Heart right ventricle (tissue), 16 donors: ENCODE measurements at regions of chr10 and their contacts with region 1.

Region 1: GRCh38 chr10:91088300-91089140 is 131.9 kb upstream of the PCGF5 start:
- DNase-seq: peak in 1 of 2 donors; percentile 55
- ATAC-seq: peak; percentile 81 to 98 (median 93)
- H3K4me3 ChIP-seq: no peak overlapping the region
- H3K27ac ChIP-seq: peak overlapping the region; percentile 24 to 92 (median 78)
- H3K4me1 ChIP-seq: peaks cover 0 to 30% (median 10%) of the 10 kb centered on the region in 9 donors
- H3K27me3 ChIP-seq: no peaks in the 10 kb centered on the region
- CTCF ChIP-seq: peak in 7 of 9 donors; percentile 10 to 40 (median 31)

Region 2: GRCh38 chr10:90462749-90463470 is 625.6 kb before region 1 on chr10:
- intact Hi-C with region 1: loop called in 1 of 10 experiments (anchors 5 kb)
- DNase-seq: no peak
- ATAC-seq: no peak
- H3K4me3 ChIP-seq: no peak overlapping the region
- H3K27ac ChIP-seq: no peak overlapping the region
- H3K4me1 ChIP-seq: no peaks in the 10 kb centered on the region
- H3K27me3 ChIP-seq: no peaks in the 10 kb centered on the region
- CTCF ChIP-seq: no peak

Region 3: GRCh38 chr10:91043173-91043910 is 45.2 kb before region 1 on chr10:
- intact Hi-C with region 1: loop called in 1 of 10 experiments (anchors 5 kb)
- DNase-seq: peak in 1 of 2 donors; percentile 22
- ATAC-seq: peak; percentile 58 to 90 (median 84)
- H3K4me3 ChIP-seq: no peak overlapping the region
- H3K27ac ChIP-seq: no peak overlapping the region
- H3K4me1 ChIP-seq: peaks cover 0 to 22% (median 0%) of the 10 kb centered on the region in 9 donors
- H3K27me3 ChIP-seq: no peaks in the 10 kb centered on the region
- CTCF ChIP-seq: peak; percentile 15 to 69 (median 50)

Region 4: DNA sequence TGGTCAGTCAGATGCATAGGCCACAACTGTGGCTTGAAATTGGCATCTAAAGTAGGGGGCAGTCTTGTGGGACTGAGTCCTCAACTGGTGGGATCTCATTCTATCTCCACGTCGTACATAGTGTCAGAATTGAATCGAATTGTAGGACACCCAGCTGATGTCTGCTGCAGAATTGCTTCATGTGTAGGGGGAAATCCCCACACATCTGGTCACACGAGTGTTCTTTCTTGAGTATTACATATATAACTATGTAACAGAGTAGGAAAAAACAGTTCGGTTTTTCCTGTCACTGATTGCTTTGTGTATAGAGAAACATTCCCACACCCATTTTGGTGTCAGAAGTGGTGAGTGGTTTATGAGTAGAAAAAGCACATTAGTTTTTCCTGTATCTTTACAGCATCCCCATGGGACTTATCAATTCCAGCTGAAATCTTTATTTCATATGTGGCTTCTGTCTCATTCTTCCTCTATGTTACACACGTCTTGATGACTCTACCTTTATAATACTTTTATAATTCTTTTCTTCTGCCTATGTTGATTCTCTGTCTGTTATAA is 52.6 kb after region 1 on chr10:
- intact Hi-C with region 1: loop called in 1 of 10 experiments (anchors 10 kb)
- DNase-seq: no peak
- ATAC-seq: no peak
- H3K4me3 ChIP-seq: no peak overlapping the region
- H3K27ac ChIP-seq: no peak overlapping the region
- H3K4me1 ChIP-seq: no peaks in the 10 kb centered on the region
- H3K27me3 ChIP-seq: peaks cover 0 to 3% (median 0%) of the 10 kb centered on the region in 7 donors
- CTCF ChIP-seq: no peak